ENCODE measurements at regions of chr11 and their contacts with region 1.

Region 1: GRCh38 chr11:64887757-64888405 is 9.5 kb upstream of the EHD1 start:
- DNase-seq: peak; percentile 85 to 87
- H3K4me3 ChIP-seq: no peak overlapping the region
- H3K4me3 Mint-ChIP-seq: peak overlapping the region; percentile 62
- H3K27ac Mint-ChIP-seq: peak overlapping the region; percentile 82
- H3K4me1 ChIP-seq: peaks cover 78% of the 10 kb centered on the region
- H3K4me1 Mint-ChIP-seq: peaks cover 55% of the 10 kb centered on the region
- H3K27me3 ChIP-seq: no peaks in the 10 kb centered on the region
- H3K27me3 Mint-ChIP-seq: no peaks in the 10 kb centered on the region
- CTCF ChIP-seq: peak; percentile 94 to 95

Region 2: GRCh38 chr11:64870176-64870892 is 17.5 kb before region 1 on chr11:
- CTCF ChIA-PET with region 1: interaction called, 9 read pairs
- POLR2A ChIA-PET with region 1: interaction called, 5 read pairs
- intact Hi-C with region 1: loop called (anchors 2 kb)
- DNase-seq: peak; percentile 81 to 84
- H3K4me3 ChIP-seq: no peak overlapping the region
- H3K4me3 Mint-ChIP-seq: peak overlapping the region; percentile 62
- H3K27ac Mint-ChIP-seq: peak overlapping the region; percentile 90
- H3K4me1 ChIP-seq: peaks cover 66% of the 10 kb centered on the region
- H3K4me1 Mint-ChIP-seq: peaks cover 35% of the 10 kb centered on the region
- H3K27me3 ChIP-seq: no peaks in the 10 kb centered on the region
- H3K27me3 Mint-ChIP-seq: no peaks in the 10 kb centered on the region
- CTCF ChIP-seq: no peak

Region 3: GRCh38 chr11:64916775-64917662 is 29.1 kb after region 1 on chr11 and contains the start of gene ATG2A:
- CTCF ChIA-PET with region 1: no interaction called
- POLR2A ChIA-PET with region 1: interaction called, 3 read pairs
- intact Hi-C with region 1: loop called (anchors 1 kb)
- DNase-seq: peak; percentile 99
- H3K4me3 ChIP-seq: peak within 1 kb of the TSS; percentile 93
- H3K4me3 Mint-ChIP-seq: peak within 1 kb of the TSS; percentile 91
- H3K27ac Mint-ChIP-seq: peak within 1 kb of the TSS; percentile 74
- H3K4me1 ChIP-seq: peaks cover 6% of the 10 kb centered on the region
- H3K4me1 Mint-ChIP-seq: no peaks in the 10 kb centered on the region
- H3K27me3 ChIP-seq: no peaks in the 10 kb centered on the region
- H3K27me3 Mint-ChIP-seq: no peaks in the 10 kb centered on the region
- CTCF ChIP-seq: no peak
- total RNA-seq, gene ATG2A: 27.9 and 31.1 TPM in 2 replicates

Region 4: DNA sequence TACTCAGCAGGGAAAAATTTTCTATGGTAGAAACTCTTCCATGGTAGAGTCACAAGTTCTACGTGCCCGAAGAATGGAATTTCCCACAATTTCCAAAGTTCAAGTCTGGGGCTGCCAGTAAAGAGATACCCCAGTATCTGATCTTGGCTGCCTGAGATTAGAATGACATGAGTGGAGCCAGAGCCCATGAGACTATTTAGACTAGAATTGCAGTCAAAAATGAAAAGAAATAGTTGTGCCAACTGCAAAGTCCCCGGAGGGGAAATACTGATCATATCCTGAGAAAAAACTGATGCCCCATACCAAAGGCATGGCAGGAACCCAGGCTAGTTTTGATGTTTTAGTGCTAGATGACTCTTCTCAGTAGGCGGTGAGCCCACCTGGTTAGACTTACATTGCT is 72.8 kb after region 1 on chr11:
- CTCF ChIA-PET with region 1: no interaction called
- POLR2A ChIA-PET with region 1: no interaction called
- intact Hi-C with region 1: no loop called
- DNase-seq: no peak
- H3K4me3 ChIP-seq: no peak overlapping the region
- H3K4me3 Mint-ChIP-seq: no peak overlapping the region
- H3K27ac Mint-ChIP-seq: no peak overlapping the region
- H3K4me1 ChIP-seq: 0 out of 2 replicates have a peak, but pooled peaks cover 4% of the 10 kb centered on the region
- H3K4me1 Mint-ChIP-seq: no peaks in the 10 kb centered on the region
- H3K27me3 ChIP-seq: no peaks in the 10 kb centered on the region
- H3K27me3 Mint-ChIP-seq: no peaks in the 10 kb centered on the region
- CTCF ChIP-seq: no peak

Region 5: DNA sequence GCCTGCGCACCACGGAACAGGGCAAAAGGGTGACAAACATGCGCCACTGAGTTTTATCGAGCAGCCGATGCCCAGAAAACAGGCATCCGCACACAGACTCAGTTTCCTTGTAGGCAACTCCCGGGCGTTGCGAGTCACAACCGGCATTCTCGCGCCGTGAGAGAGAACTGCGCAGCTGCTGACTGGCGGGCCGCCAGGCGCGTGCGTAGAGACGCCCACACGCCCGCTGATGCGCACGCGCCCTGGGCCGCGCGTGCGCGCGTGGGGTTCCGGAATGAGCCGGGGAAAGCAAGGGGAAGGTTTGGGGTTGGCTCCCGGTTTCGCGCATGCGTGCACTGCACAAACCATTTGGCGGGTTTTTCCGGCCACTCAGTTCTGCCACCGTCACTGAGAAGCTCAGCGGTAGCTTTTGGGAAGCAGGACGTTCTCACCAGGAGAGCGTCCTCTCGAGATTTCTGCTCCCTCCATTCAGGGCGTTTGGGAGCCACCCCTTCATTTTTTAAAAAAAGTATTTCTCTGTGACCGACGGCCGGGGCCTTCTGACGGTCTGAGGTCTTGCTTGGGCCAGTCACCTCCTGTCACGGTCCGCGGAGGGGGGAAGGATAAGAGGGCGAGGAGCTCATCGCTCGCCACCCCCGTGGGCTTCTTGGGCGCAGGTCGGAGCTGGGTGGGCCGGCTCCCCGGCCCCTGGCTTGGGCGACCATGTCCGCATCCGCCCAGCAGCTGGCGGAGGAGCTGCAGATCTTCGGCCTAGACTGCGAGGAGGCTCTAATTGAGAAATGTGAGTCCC is 373.9 kb after region 1 on chr11 and contains the start of gene POLA2:
- CTCF ChIA-PET with region 1: no interaction called
- POLR2A ChIA-PET with region 1: no interaction called
- intact Hi-C with region 1: no loop called
- DNase-seq: peak; percentile 96
- H3K4me3 ChIP-seq: peak within 1 kb of the TSS; percentile 71
- H3K4me3 Mint-ChIP-seq: peak within 1 kb of the TSS; percentile 81
- H3K27ac Mint-ChIP-seq: peak within 1 kb of the TSS; percentile 70
- H3K4me1 ChIP-seq: no peaks in the 10 kb centered on the region
- H3K4me1 Mint-ChIP-seq: peaks cover 22% of the 10 kb centered on the region
- H3K27me3 ChIP-seq: no peaks in the 10 kb centered on the region
- H3K27me3 Mint-ChIP-seq: no peaks in the 10 kb centered on the region
- CTCF ChIP-seq: no peak
- total RNA-seq, gene POLA2: 23.2 and 25.3 TPM in 2 replicates

Measured in Caco-2 (cell line).